Naive thymus-derived CD4-positive, alpha-beta T cell (primary cell): ENCODE measurements at regions of chr3 and their contacts with region 1.

Region 1: DNA sequence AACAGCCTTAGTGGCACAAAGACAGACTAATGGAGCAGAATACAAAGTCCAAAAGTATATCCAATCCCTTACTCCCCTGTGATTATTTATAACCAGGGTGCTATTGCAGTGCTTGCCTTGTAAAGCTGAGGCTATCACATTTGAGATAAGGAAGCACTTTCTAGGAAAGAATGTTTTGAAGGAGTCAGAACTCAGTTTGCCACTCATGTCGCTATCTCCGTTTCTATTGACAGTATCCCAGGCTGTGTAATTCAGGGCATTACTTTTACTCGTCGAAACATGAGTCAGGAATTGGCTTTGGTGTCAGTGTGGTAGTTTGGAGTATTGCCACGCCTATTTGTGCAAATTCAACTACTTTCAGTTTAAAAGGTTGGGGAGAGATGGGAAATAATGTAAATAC is 78.4 kb downstream of the FBXL2 start:
- DNase-seq: no peak
- ATAC-seq: no peak
- H3K4me3 ChIP-seq: no peak overlapping the region
- H3K4me3 Mint-ChIP-seq: no peak overlapping the region
- H3K27ac ChIP-seq: no peak overlapping the region
- H3K27ac Mint-ChIP-seq: no peak overlapping the region
- H3K4me1 ChIP-seq: no peaks in the 10 kb centered on the region
- H3K4me1 Mint-ChIP-seq: no peaks in the 10 kb centered on the region
- H3K27me3 ChIP-seq: no peaks in the 10 kb centered on the region
- H3K27me3 Mint-ChIP-seq: peaks cover 6 to 24% (median 10%) of the 10 kb centered on the region in 5 donors

Region 2: GRCh38 chr3:33313331-33313730 is 42.3 kb before region 1 on chr3:
- CTCF ChIA-PET with region 1: no interaction called
- POLR2A ChIA-PET with region 1: no interaction called
- intact Hi-C with region 1: no loop called
- DNase-seq: no peak
- ATAC-seq: no peak
- H3K4me3 ChIP-seq: no peak overlapping the region
- H3K4me3 Mint-ChIP-seq: no peak overlapping the region
- H3K27ac ChIP-seq: no peak overlapping the region
- H3K27ac Mint-ChIP-seq: no peak overlapping the region
- H3K4me1 ChIP-seq: no peaks in the 10 kb centered on the region
- H3K4me1 Mint-ChIP-seq: peaks cover 0 to 6% (median under 1%) of the 10 kb centered on the region in 7 donors
- H3K27me3 ChIP-seq: no peaks in the 10 kb centered on the region
- H3K27me3 Mint-ChIP-seq: peaks cover 16 to 34% (median 28%) of the 10 kb centered on the region in 5 donors

Region 3: DNA sequence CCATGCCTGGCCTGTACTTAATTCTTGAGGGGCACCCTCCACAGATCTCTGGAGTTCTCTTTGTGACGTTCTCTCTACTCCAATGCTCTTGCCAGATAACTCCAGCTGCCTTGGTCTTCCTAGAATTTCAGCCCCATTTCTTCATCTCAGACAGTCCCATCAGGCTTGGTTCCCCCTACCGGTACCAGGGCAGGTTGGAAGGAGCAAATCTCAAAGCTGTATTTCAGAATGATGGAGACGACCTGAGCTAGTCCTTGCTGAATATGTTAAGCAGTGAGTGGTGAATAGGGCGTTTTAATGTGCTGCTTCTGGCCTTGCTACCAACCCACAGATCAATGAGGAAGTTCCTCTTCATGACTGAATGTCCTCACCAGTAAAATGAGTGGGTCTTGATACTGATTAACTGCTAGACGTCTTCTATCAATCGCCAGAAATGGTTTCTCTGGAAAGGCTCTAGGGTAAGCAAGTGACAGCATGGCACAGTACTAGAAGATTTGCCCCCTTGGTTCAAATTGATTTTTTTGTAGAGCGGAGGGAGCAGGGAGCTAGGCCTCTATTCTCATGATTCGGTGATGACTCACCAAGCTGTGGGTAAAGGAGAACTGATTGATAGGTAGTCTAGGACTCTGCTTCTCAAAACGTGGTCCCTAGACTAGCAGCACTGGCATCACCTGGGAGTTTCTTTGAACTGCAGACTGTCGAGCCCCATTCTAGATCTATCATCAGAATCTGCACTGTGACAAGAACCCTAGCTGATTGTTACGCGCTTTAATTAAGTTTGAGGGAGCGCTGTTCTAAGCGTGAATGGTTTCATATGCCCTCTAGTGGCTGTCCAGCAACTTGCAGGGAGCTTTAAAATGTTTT is 16.8 kb after region 1 on chr3:
- CTCF ChIA-PET with region 1: interaction called, 12 read pairs
- POLR2A ChIA-PET with region 1: no interaction called
- intact Hi-C with region 1: no loop called
- DNase-seq: peak in 8 of 9 donors; percentile 14 to 57 (median 38)
- ATAC-seq: peak; percentile 80
- H3K4me3 ChIP-seq: no peak overlapping the region
- H3K4me3 Mint-ChIP-seq: no peak overlapping the region
- H3K27ac ChIP-seq: no peak overlapping the region
- H3K27ac Mint-ChIP-seq: no peak overlapping the region
- H3K4me1 ChIP-seq: peaks cover 0 to 4% of the 10 kb centered on the region in 2 donors
- H3K4me1 Mint-ChIP-seq: peaks cover 2 to 8% (median 6%) of the 10 kb centered on the region in 7 donors
- H3K27me3 ChIP-seq: peaks cover 0 to 6% of the 10 kb centered on the region in 2 donors
- H3K27me3 Mint-ChIP-seq: peaks cover 12 to 32% (median 22%) of the 10 kb centered on the region in 5 donors